H1 (cell line): ENCODE measurements at regions of chr4 and their contacts with region 1.

Region 1: DNA sequence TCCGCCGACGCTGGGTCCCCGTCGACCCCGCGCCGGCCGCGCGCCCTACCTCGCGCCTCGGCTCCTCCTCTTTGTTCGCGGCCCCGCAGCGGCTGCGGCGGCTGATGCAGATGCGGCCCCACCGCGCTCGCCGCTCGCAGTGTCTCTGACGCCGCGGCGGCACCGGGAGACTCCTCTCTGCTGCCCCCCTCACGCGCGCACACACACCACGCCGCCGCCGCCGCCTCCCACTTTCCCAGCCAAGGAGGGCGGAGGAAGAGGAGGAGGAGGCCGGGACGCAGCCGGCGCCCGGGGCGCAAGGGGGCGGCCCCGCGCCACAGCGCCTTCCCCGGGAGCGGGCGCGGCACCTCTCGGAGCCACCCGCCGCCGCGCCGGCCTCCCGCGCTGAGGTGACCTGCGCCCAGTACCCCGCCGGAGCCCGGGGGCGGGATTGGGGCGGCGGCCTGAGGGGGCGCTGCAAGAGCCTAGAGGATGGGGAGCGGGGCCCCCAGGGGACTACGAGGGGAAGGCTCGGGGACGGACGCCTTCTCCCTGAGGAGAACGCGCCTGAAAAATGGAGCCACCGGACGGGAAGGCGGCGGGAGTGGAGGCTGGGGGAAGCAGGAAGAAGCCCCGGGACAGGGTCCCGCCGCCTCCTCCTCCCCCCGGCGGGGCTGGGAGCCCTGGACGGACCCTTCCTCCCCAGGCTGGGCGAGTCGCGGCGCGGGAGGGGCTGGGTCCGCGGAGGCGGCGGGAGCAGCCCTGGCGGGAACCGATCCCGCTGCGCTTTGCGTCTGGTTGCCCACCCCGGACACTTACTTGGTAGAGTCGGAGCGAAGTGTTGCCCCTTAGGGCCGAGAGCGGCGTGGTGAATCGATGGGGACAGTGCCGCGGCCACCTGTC is at the start of gene SH3RF1:
- DNase-seq: peak in 1 of 2 experiments; percentile 83
- H3K4me3 ChIP-seq: peak within 1 kb of the TSS; percentile 75 to 83 (median 82)
- H3K27ac ChIP-seq: peak within 1 kb of the TSS; percentile 73
- H3K4me1 ChIP-seq: peaks cover 2 to 12% (median 5%) of the 10 kb centered on the region in 4 experiments; a peak in 5 of 7 replicates
- H3K27me3 ChIP-seq: no peaks in the 10 kb centered on the region; a peak in 2 of 7 replicates
- CTCF ChIP-seq: peak in 1 of 3 experiments; percentile 17; a peak in 2 of 4 replicates
- EP300 ChIP-seq: no peak
- POLR2A ChIP-seq: peak in 1 of 2 experiments; percentile 56; a peak in 1 of 3 replicates
- RAD21 ChIP-seq: peak; percentile 0 to 20; a peak in 2 of 4 replicates
- total RNA-seq, gene SH3RF1: 14.2 and 15.1 TPM in 2 replicates

Region 2: GRCh38 chr4:169010125-169011023 is 260.7 kb before region 1 on chr4 and contains the start of gene CBR4:
- CTCF ChIA-PET with region 1: no interaction called
- POLR2A ChIA-PET with region 1: interaction called, 10 read pairs
- DNase-seq: peak; percentile 88 to 98
- H3K4me3 ChIP-seq: peak within 1 kb of the TSS; percentile 78 to 89 (median 88)
- H3K27ac ChIP-seq: peak within 1 kb of the TSS; percentile 88
- H3K4me1 ChIP-seq: peaks cover 0 to 3% (median under 1%) of the 10 kb centered on the region in 4 experiments; a peak in 3 of 7 replicates
- H3K27me3 ChIP-seq: no peaks in the 10 kb centered on the region
- CTCF ChIP-seq: peak; percentile 8 to 15 (median 13); a peak in 3 of 4 replicates
- EP300 ChIP-seq: no peak
- POLR2A ChIP-seq: peak; percentile 38 to 70
- RAD21 ChIP-seq: peak; percentile 4 to 6; a peak in 1 of 4 replicates
- total RNA-seq, gene CBR4: 29.5 and 30.6 TPM in 2 replicates

Region 3: GRCh38 chr4:169254546-169254983 is 16.5 kb before region 1 on chr4:
- CTCF ChIA-PET with region 1: interaction called, 24 read pairs
- POLR2A ChIA-PET with region 1: interaction called, 34 read pairs
- DNase-seq: no peak
- H3K4me3 ChIP-seq: no peak overlapping the region
- H3K27ac ChIP-seq: no peak overlapping the region
- H3K4me1 ChIP-seq: peaks cover 0 to 21% (median 17%) of the 10 kb centered on the region in 4 experiments; a peak in 4 of 7 replicates
- H3K27me3 ChIP-seq: no peaks in the 10 kb centered on the region
- CTCF ChIP-seq: no peak
- EP300 ChIP-seq: no peak
- POLR2A ChIP-seq: no peak
- RAD21 ChIP-seq: no peak

Region 4: GRCh38 chr4:169260217-169260866 is 10.7 kb before region 1 on chr4:
- CTCF ChIA-PET with region 1: interaction called, 24 read pairs
- POLR2A ChIA-PET with region 1: interaction called, 34 read pairs
- DNase-seq: no peak
- H3K4me3 ChIP-seq: no peak overlapping the region
- H3K27ac ChIP-seq: no peak overlapping the region
- H3K4me1 ChIP-seq: peaks cover 0 to 9% (median 5%) of the 10 kb centered on the region in 4 experiments; a peak in 4 of 7 replicates
- H3K27me3 ChIP-seq: no peaks in the 10 kb centered on the region
- CTCF ChIP-seq: no peak
- EP300 ChIP-seq: no peak
- POLR2A ChIP-seq: no peak
- RAD21 ChIP-seq: no peak; a peak in 1 of 4 replicates